ENCODE measurements at regions of chr17 and their contacts with region 1.

Region 1: DNA sequence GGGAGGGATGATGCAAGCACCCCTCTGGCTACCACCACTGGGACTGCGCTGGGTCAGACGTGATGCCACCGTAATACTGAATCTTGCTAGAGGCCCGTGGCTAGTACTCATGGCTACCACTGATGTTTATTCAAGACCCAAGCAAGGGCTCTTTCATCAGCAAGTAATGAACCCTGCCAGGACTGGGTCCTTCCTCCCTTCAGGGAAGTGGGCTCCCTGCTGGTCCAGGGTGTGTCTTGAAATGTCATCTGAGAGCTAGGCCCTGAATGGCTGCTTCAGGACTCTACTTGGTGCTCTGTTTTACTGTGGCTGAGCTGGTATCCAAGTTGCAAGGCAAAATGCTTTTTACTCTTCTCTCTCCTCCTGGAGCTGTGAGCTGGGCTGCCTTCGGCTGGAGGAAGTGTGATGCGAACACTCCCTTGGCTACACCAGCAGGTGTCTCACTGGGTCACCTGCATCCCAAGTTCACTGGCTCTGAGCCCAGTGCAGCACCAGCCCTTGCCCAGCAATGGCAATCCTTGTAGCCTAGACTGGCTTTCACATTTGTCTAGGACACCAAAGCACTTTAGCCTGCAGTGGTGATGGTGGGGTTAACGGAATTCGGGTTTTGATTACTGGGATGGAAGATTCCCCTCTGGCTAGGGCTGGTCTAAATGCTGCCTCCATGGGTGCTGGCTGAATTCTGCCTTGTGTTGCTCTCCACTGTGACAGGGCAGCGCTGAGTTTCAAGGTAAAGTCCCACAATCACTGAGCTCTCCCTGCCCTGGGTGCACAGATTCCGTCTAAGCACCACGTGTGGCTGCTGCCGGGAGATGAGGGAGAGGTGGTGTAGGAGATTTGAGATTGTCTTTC is 98.6 kb downstream of the USP22 start:
- DNase-seq: peak in 1 of 2 experiments; percentile 64
- H3K4me3 ChIP-seq: no peak overlapping the region
- H3K27ac ChIP-seq: 0 out of 2 replicates have a peak overlapping the region, but pooled peaks have one; percentile 21
- H3K4me1 ChIP-seq: peaks cover 3 to 9% (median 5%) of the 10 kb centered on the region in 4 experiments; a peak in 6 of 7 replicates
- H3K27me3 ChIP-seq: no peaks in the 10 kb centered on the region
- CTCF ChIP-seq: peak; percentile 70 to 83 (median 73)
- EP300 ChIP-seq: no peak
- POLR2A ChIP-seq: no peak
- RAD21 ChIP-seq: peak; percentile 64 to 71

Region 2: GRCh38 chr17:20784100-20784665 is 160.1 kb before region 1 on chr17:
- CTCF ChIA-PET with region 1: no interaction called
- POLR2A ChIA-PET with region 1: no interaction called
- DNase-seq: no peak
- H3K4me3 ChIP-seq: no peak overlapping the region
- H3K27ac ChIP-seq: no peak overlapping the region
- H3K4me1 ChIP-seq: no peaks in the 10 kb centered on the region
- H3K27me3 ChIP-seq: no peaks in the 10 kb centered on the region
- CTCF ChIP-seq: no peak
- EP300 ChIP-seq: no peak
- POLR2A ChIP-seq: no peak
- RAD21 ChIP-seq: no peak

Region 3: DNA sequence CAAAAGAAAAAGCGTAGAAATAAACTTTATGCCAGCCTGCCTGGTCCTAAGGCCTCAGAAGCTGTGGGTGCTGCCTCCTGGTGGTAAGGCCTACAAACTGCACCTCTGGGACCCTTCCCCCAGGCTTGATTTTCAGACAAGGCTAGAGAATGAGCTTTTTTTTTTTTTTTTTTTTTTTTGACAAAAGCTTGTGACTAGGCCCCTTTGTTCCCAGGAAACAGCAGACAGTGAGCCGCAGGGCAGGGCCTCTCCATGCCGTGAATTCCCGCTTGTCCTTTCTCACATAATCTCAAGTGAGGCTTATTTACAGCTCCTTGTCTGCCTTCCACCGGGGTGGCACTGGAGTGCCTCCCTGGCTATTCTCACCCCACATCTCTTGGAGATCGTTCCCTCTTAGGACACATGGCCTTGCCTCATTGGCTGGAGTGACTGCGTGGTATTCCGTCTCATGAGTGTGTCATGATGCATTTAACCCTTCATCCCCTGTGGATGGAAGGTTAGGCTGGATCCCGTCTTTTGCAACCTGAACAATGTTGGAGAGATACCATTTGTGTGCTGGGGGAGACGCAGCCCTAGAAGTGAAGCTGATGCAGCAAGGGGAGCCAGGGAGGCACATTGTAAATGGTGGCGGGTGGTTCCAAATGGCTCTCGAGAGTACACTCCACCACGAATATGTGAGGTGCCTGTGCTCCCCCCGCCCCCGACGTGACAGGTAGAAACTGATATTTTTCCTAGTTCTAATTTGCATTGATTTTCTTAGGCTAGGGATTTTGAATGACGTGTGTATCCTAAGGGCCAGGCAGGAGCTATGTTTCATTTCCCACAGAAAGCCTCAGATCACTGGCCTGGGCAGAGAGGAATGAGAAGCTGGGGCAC is 49.0 kb after region 1 on chr17:
- CTCF ChIA-PET with region 1: interaction called, 21 read pairs
- POLR2A ChIA-PET with region 1: interaction called, 5 read pairs
- DNase-seq: peak; percentile 79 to 89
- H3K4me3 ChIP-seq: no peak overlapping the region
- H3K27ac ChIP-seq: peak overlapping the region; percentile 54; the same call in 1 of the 2 replicates
- H3K4me1 ChIP-seq: peaks cover 0 to 5% (median 2%) of the 10 kb centered on the region in 4 experiments; a peak in 4 of 7 replicates
- H3K27me3 ChIP-seq: no peaks in the 10 kb centered on the region
- CTCF ChIP-seq: peak; percentile 75 to 87 (median 79)
- EP300 ChIP-seq: no peak
- POLR2A ChIP-seq: 0 out of 3 replicates have a peak, but pooled peaks of 1 of the 2 experiments have one; percentile 32
- RAD21 ChIP-seq: peak; percentile 76 to 78